ENCODE measurements at regions of chr21 and their contacts with region 1.

Region 1: DNA sequence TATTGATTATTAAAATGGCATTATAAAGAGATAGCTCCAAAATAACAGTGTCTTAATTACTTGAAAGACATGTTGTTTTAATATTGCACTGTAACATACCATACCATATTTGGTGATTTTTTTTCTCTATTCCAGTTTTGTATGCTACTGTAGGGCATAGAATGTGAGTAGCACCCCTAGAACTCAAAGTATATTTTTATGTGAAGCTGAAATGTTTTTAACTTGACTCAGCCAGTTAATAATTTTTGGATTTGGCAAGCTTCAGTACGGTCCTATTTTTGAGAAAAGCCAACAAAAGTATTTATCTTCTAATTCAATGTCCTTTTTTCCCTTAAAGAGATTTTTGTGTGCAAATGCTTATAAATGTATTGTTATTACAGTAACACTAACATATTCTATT is 593.8 kb downstream of the USP25 start:
- DNase-seq: no peak

Region 2: DNA sequence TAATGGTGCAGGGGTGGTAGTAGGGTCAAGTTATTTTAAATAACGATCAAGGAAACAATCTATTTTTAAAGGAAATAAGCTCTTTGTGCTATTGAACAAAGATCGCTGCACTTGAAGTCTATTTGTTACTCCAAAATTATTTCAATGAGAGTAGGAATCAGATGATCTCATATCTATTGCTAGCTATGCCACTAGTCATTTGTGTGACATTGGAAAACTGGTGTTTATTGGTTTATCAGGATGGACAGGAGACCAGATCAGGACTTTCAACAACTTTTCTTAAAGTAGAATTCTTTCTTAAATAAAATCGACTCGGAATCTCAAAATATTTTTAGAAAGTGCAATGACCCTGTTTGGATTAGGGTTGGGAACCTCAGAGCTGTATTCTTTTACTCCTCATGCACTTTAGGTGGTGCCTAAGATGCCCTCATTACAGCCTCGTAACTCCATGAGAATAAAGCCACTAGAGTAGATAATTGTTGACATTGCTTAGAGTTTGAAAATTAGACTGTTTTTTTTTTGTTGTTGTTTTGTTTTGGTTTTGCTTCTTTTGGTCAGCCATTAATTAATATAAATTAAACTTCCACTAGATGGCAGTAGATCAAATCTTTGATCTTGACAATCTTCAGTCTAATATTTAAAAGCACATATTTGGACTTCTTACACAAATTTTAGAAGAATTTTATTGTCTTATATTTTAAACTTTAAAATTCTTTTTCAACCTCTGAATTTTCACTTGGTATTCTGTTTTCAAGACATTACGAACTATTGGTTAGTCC is 241.4 kb before region 1 on chr21:
- intact Hi-C with region 1: loop called in 1 of 2 experiments (anchors 10 kb)
- DNase-seq: no peak

Region 3: GRCh38 chr21:16419188-16419921 is 95.8 kb after region 1 on chr21:
- intact Hi-C with region 1: loop called in 1 of 2 experiments (anchors 5 kb)
- DNase-seq: peak; percentile 80

Region 4: GRCh38 chr21:18218331-18218730 is 1894.7 kb after region 1 on chr21:
- intact Hi-C with region 1: no loop called
- DNase-seq: no peak